OCI-LY7 (cell line): ENCODE measurements at regions of chr2 and their contacts with region 1.

Region 1: DNA sequence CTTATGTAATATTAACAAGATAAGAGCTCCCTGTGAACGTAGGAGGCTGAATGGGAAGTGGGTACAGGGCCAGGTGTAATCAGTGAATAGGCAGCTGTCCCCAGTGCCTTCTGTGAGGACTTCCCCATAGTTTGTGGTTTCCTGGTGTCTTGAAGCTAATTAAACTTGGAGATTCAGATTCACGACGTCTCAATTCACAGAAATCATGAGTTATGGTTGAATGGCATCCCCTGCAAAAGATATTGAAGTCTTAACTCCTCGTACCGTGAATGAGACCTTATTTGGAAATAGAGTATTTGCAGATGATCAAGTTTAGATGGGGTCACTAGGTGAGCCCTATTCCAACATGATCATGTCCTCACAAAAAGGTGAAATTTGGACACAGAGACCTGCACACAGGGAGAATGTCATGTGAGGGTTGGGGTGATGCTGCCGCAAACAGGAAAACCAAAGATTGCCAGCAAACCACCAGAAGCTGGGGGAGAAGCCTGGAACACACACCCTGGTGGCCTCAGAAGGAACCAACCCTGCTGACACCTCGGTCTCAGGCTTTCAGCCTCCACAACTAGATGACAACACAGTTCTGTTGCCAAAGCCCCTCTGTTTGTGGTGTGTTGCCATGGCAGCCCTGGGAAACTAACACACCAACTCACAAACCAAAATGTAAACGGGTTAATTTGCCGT is 13.2 kb downstream of the ARL4C start:
- DNase-seq: peak; percentile 95
- H3K4me3 ChIP-seq: peak overlapping the region; percentile 56
- H3K27ac ChIP-seq: peak overlapping the region; percentile 97
- H3K4me1 ChIP-seq: peaks cover 79% of the 10 kb centered on the region
- CTCF ChIP-seq: peak; percentile 80

Region 2: GRCh38 chr2:234288974-234289455 is 194.7 kb before region 1 on chr2:
- CTCF ChIA-PET with region 1: interaction called, 4 read pairs
- POLR2A ChIA-PET with region 1: interaction called, 18 read pairs
- intact Hi-C with region 1: loop called (anchors 1 kb)
- DNase-seq: peak; percentile 72
- H3K4me3 ChIP-seq: peak overlapping the region; percentile 4
- H3K27ac ChIP-seq: peak overlapping the region; percentile 97
- H3K4me1 ChIP-seq: peaks cover 56% of the 10 kb centered on the region
- CTCF ChIP-seq: peak; percentile 95

Region 3: DNA sequence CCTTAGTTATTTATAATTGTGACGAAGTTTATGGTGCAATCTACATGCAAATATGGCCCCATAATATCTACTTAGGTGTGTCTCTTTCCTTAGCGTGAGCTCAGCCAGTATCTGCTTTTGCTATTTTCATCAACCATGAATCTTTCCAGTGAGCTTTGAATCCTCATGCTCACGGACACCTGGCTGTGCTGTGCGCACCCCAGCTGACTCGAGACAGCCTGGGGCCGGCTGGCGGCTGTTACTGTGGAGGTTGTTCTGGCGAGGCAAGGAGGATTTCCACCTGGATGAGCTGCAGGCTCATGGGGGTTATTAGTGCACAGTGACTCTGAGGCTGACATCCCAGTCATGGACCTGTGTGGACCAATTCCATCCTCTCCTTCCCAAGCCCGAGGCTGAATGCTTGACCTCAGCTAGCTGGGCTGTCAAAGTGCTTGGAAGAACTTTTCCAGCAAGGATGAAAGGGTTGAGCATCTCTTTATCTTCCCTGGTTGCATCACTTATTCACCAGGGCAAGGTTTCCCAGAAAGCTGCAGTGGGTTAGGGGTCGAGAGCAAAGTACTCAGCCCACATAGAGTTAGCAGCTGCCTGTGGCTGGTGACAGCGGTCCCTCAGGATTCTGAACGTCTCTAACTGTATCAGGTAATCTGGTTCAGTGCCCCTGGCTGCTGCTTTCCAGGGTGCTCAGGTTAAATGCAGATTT is 128.5 kb before region 1 on chr2:
- CTCF ChIA-PET with region 1: no interaction called
- POLR2A ChIA-PET with region 1: no interaction called
- intact Hi-C with region 1: loop called (anchors 2 kb)
- DNase-seq: peak; percentile 92
- H3K4me3 ChIP-seq: peak overlapping the region; percentile 39
- H3K27ac ChIP-seq: peak overlapping the region; percentile 73
- H3K4me1 ChIP-seq: peaks cover 42% of the 10 kb centered on the region
- CTCF ChIP-seq: no peak; the same call in 1 of the 2 replicates

Region 4: DNA sequence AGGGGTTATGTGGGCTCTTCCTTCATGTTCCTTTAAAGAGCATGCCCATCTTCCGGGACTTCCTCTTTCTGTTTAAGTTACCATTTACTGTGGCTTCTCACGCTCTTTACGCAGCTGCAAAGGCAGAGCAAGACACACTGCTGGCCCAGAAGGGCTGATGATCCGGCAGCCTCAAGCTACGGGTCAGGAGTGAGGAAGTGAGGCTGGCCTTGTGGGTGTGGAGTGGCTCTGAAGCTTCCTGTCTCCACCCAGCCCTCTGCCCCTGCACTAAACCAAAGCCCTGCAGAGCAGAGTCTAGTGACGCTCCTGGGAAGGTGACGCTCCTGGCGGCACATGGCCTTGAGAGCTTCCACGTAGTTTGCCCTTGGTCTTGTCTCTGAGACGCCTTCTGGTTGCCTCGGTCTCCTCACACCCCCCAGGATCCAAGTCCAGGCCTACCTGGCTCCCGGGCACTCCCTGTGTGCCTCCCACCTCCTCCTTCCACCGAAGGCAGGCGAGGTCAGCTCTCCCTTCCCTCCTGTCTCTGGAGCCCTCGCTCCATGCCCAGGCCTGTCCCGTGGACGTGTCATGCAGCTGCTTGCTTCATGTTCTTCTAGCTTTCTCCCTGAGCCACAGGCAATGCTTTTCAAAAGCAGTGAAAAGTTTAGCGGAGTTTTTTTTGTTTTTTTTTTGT is 37.2 kb before region 1 on chr2:
- CTCF ChIA-PET with region 1: interaction called, 3 read pairs
- POLR2A ChIA-PET with region 1: interaction called, 9 read pairs
- intact Hi-C with region 1: loop called (anchors 2 kb)
- DNase-seq: peak; percentile 93
- H3K4me3 ChIP-seq: no peak overlapping the region
- H3K27ac ChIP-seq: peak overlapping the region; percentile 77
- H3K4me1 ChIP-seq: peaks cover 51% of the 10 kb centered on the region
- CTCF ChIP-seq: no peak

Region 5: DNA sequence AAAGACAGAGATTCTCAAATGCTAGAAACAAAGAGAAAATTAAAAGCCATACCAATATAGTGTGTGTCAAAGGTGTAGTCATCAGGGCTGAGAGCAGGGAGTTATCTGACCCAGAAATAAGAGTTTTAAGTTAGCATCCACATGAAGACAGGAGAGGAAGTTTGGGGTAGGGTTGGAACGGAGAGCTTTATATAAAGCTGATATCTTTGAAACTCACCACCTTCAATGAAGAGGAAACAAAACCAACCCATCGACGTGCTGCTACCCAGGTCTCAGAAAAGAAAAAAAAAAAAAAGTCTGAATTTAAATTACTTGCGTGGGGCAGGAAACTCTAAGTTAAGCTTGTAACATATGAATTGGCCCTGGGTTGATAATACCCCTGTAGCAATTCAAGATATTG is 29.3 kb before region 1 on chr2:
- CTCF ChIA-PET with region 1: no interaction called
- POLR2A ChIA-PET with region 1: interaction called, 10 read pairs
- intact Hi-C with region 1: no loop called
- DNase-seq: peak; percentile 61
- H3K4me3 ChIP-seq: peak overlapping the region; percentile 20
- H3K27ac ChIP-seq: peak overlapping the region; percentile 3
- H3K4me1 ChIP-seq: peaks cover 38% of the 10 kb centered on the region
- CTCF ChIP-seq: no peak

Region 6: GRCh38 chr2:234512884-234513669 is 29.4 kb after region 1 on chr2:
- CTCF ChIA-PET with region 1: no interaction called
- POLR2A ChIA-PET with region 1: no interaction called
- intact Hi-C with region 1: no loop called
- DNase-seq: no peak
- H3K4me3 ChIP-seq: no peak overlapping the region
- H3K27ac ChIP-seq: no peak overlapping the region
- H3K4me1 ChIP-seq: no peaks in the 10 kb centered on the region
- CTCF ChIP-seq: no peak